B cell (primary cell): ENCODE measurements at regions of chr20 and their contacts with region 1.

Region 1: DNA sequence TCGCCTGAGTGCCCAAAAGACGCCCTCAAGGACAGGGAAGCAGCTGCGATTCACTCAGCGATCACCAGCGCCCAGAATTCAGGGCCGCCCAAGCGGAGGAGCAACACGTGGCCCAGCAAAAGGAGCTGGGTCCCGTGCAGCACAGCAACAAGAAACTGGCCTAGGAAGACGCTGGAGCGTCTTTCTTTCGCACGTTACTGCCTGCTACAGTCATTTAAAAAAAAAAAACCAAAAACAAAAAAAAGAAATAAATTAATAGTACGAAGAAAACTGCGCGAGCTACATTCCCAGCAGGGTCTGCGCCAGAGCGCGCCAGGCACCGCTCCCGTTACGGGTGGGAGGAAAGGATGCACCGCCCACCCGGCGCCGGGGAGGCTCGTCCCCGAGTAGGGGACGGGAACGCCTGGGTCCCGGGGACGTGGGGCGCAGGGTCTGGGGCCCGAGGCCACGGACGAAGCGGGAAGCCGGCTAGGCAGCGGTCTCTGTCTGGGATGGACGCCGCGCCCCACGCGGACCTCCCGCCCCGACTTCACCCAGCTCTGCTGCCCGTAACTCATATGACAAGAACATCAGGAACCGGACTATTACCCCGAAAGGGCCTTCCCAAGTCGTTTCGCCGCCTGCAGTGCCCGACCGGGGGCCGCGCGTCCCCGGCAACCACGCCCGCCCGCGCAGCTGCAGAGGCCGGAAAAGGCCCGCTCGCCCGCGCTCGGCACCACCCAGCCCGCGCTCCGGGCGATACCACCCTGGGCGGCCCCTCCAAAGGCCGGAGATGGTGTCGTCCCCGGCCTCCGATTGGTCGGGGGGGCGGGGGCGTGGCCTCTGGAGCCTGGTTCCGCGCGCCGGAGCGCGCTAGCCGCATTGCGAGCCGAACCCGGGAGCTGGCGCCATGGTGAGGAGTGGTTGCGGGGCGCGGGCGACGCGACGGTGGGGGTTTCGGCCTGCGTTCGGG is at the start of gene NOP56:
- DNase-seq: peak; percentile 98
- ATAC-seq: peak; percentile 89
- H3K4me3 ChIP-seq: peak within 1 kb of the TSS; percentile 81 to 86 (median 85)
- H3K4me3 Mint-ChIP-seq: peak within 1 kb of the TSS; percentile 91
- H3K27ac ChIP-seq: peak within 1 kb of the TSS; percentile 77 to 93
- H3K27ac Mint-ChIP-seq: peak within 1 kb of the TSS; percentile 91
- H3K4me1 ChIP-seq: peaks cover 19 to 20% of the 10 kb centered on the region in 2 donors
- H3K4me1 Mint-ChIP-seq: peaks cover 25% of the 10 kb centered on the region
- H3K27me3 ChIP-seq: no peaks in the 10 kb centered on the region
- H3K27me3 Mint-ChIP-seq: no peaks in the 10 kb centered on the region
- CTCF ChIP-seq: no peak
- total RNA-seq, gene NOP56: 229 and 247 TPM in 2 replicates

Region 2: GRCh38 chr20:2508631-2509467 is 143.2 kb before region 1 on chr20 and contains the start of gene ZNF343:
- CTCF ChIA-PET with region 1: no interaction called
- POLR2A ChIA-PET with region 1: interaction called, 7 read pairs
- intact Hi-C with region 1: loop called (anchors 1 kb)
- DNase-seq: peak; percentile 89
- ATAC-seq: peak; percentile 91
- H3K4me3 ChIP-seq: peak within 1 kb of the TSS; percentile 75 to 95 (median 91)
- H3K4me3 Mint-ChIP-seq: peak within 1 kb of the TSS; percentile 100
- H3K27ac ChIP-seq: peak within 1 kb of the TSS; percentile 64 to 77
- H3K27ac Mint-ChIP-seq: peak within 1 kb of the TSS; percentile 99
- H3K4me1 ChIP-seq: peaks cover 8 to 16% of the 10 kb centered on the region in 2 donors
- H3K4me1 Mint-ChIP-seq: peaks cover 20% of the 10 kb centered on the region
- H3K27me3 ChIP-seq: peaks cover 0 to 6% (median 3%) of the 10 kb centered on the region in 4 experiments
- H3K27me3 Mint-ChIP-seq: peaks cover 27% of the 10 kb centered on the region
- CTCF ChIP-seq: no peak
- total RNA-seq, gene ZNF343: 19.8 and 23.4 TPM in 2 replicates

Region 3: GRCh38 chr20:2663887-2664719 is 12.1 kb after region 1 on chr20 and contains the start of gene IDH3B:
- CTCF ChIA-PET with region 1: interaction called, 22 read pairs
- POLR2A ChIA-PET with region 1: interaction called, 57 read pairs
- intact Hi-C with region 1: loop called (anchors 1 kb)
- DNase-seq: peak; percentile 92
- ATAC-seq: peak; percentile 95
- H3K4me3 ChIP-seq: peak within 1 kb of the TSS; percentile 71 to 96 (median 80)
- H3K4me3 Mint-ChIP-seq: peak within 1 kb of the TSS; percentile 92
- H3K27ac ChIP-seq: peak within 1 kb of the TSS; percentile 88 to 98
- H3K27ac Mint-ChIP-seq: peak within 1 kb of the TSS; percentile 98
- H3K4me1 ChIP-seq: peaks cover 13 to 14% of the 10 kb centered on the region in 2 donors
- H3K4me1 Mint-ChIP-seq: peaks cover 20% of the 10 kb centered on the region
- H3K27me3 ChIP-seq: peaks cover 0 to 6% (median 0%) of the 10 kb centered on the region in 4 experiments
- H3K27me3 Mint-ChIP-seq: peaks cover 12% of the 10 kb centered on the region
- CTCF ChIP-seq: no peak
- total RNA-seq, gene IDH3B: 126 and 131 TPM in 2 replicates

Region 4: DNA sequence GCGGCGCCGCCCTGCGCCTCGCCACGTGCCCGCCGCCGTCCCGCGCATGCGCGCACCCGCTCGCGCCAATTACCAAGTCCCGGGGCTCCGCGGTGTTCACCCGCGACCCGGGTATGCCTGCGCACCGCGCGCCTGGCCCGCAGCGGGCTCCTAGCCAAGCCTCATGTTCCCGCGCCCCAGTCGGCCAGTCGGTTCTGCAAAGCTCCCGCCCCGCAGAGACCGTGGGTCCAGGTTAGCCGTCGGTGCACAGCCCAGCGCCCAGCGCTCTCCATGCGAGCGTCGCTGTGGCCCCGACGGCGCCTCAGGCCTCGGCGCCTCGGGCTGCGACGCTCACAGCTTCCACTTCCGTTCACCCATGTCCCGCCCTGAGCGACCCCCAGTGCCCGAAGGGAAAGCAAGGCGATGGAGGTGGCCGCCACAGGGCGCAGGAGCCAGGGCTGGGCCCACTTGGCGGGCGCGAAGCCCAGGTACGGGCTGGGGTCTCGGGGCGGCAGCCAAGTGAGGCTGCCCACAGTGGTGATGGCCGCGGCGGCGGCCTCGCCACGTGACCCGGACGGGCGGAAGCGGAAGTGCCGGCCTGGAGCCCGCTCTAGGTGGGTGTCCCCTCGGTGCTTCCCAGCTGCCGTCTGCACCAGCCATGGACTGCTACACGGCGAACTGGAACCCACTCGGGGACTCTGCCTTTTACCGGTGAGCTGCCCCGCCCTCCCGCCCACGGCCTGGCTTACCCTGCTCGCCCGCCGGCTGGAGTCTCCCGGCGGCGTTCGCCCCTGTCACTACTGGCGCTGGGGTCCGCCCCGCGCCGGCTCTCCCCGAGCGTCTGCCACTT is 188.3 kb after region 1 on chr20 and contains the starts of genes PCED1A and VPS16:
- CTCF ChIA-PET with region 1: no interaction called
- POLR2A ChIA-PET with region 1: no interaction called
- intact Hi-C with region 1: loop called (anchors 2 kb)
- DNase-seq: peak; percentile 92
- ATAC-seq: peak; percentile 93
- H3K4me3 ChIP-seq: peak within 1 kb of the TSS; percentile 63 to 90 (median 80)
- H3K4me3 Mint-ChIP-seq: peak within 1 kb of the TSS; percentile 91
- H3K27ac ChIP-seq: peak within 1 kb of the TSS; percentile 78 to 85
- H3K27ac Mint-ChIP-seq: peak within 1 kb of the TSS; percentile 91
- H3K4me1 ChIP-seq: peaks cover 16 to 27% of the 10 kb centered on the region in 2 donors
- H3K4me1 Mint-ChIP-seq: peaks cover 22% of the 10 kb centered on the region
- H3K27me3 ChIP-seq: no peaks in the 10 kb centered on the region
- H3K27me3 Mint-ChIP-seq: no peaks in the 10 kb centered on the region
- CTCF ChIP-seq: no peak
- total RNA-seq, gene PCED1A: 83.5 and 96.8 TPM in 2 replicates
- total RNA-seq, gene VPS16: 59.5 and 63.0 TPM in 2 replicates

Region 5: DNA sequence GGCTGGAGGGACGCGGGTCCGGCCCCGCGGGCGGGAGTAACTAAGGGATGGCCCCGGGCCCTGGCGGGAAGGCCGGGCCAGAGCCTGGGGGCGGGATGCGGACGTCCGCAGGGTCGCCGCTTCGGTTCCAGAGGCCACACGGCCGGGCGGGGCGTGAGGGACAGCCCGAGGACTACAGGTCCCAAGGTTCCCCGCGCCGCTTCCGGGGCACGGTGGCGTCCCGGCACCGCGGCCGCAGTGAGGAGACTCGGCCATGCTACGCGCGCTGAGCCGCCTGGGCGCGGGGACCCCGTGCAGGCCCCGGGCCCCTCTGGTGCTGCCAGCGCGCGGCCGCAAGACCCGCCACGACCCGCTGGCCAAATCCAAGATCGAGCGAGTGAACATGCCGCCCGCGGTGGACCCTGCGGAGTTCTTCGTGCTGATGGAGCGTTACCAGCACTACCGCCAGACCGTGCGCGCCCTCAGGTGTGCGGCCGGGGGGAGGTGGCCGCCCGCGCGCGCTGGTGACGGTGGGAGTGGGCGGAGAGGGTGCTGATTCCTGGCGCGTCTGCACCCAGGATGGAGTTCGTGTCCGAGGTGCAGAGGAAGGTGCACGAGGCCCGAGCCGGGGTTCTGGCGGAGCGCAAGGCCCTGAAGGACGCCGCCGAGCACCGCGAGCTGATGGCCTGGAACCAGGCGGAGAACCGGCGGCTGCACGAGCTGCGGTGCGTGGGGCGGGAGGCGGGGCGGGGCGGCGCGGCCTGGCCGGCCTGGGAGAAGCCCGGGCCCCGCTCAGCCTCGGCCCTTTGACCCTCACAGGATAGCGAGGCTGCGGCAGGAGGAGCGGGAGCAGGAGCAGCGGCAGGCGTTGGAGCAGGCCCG is 394.0 kb after region 1 on chr20 and contains the start of gene MRPS26:
- CTCF ChIA-PET with region 1: no interaction called
- POLR2A ChIA-PET with region 1: interaction called, 4 read pairs
- intact Hi-C with region 1: loop called (anchors 2 kb)
- DNase-seq: peak; percentile 89
- ATAC-seq: peak; percentile 90
- H3K4me3 ChIP-seq: peak within 1 kb of the TSS; percentile 3 to 89 (median 82)
- H3K4me3 Mint-ChIP-seq: peak within 1 kb of the TSS; percentile 95
- H3K27ac ChIP-seq: peak within 1 kb of the TSS; percentile 63 to 88
- H3K27ac Mint-ChIP-seq: peak within 1 kb of the TSS; percentile 97
- H3K4me1 ChIP-seq: peaks cover 11 to 17% of the 10 kb centered on the region in 2 donors
- H3K4me1 Mint-ChIP-seq: peaks cover 15% of the 10 kb centered on the region
- H3K27me3 ChIP-seq: no peaks in the 10 kb centered on the region
- H3K27me3 Mint-ChIP-seq: no peaks in the 10 kb centered on the region
- CTCF ChIP-seq: no peak
- total RNA-seq, gene MRPS26: 33.3 and 35.9 TPM in 2 replicates